Panc1 (cell line): ENCODE measurements at regions of chr11 and their contacts with region 1.

Region 1: GRCh38 chr11:46389450-46390253 is 1.9 kb downstream of the CHRM4 start:
- DNase-seq: no peak
- ATAC-seq: peak; percentile 80
- H3K4me3 ChIP-seq: peak overlapping the region; percentile 54 to 70
- H3K27ac ChIP-seq: no peak overlapping the region; the same call in 1 of the 2 replicates
- H3K4me1 ChIP-seq: peaks cover 17% of the 10 kb centered on the region
- H3K27me3 ChIP-seq: peaks cover 3% of the 10 kb centered on the region; the same call in 1 of the 2 replicates
- CTCF ChIP-seq: peak; percentile 98

Region 2: DNA sequence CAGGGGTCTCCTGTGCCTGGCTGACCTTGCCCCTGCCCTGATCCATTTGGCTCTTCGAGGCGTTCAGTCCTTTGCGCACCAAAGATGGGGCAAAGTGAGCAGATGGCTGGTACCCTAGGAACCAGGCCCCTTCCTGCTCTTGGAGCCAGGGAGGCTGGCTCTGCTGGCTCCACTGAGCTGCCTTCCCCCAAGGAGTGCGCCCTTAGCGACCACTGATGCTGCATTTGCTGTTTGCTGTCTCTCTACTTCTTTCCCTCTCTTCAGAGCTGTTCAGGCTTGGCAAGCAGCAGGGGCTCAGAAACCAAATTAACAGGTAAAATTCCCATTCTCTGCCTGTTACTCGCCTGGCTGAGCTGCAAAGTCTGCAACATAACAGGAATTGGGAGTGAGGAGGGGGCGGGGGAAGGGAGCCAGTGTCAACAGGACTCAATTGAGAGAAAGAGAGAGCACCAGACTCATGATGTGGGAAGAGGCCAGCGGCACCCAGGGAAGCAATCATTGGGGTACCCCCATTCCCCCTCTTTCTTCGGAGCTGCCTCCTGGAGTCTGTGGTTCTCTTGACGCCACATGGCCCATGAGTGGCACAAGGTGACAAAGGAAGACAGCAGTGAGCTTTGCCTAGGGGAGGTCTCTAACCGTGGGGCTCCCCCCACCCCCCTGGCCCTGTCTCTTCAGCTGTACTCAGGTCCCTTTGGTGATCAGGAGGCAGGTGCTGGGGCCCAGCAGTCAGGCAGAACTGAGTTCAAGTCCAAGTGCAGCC is 1541.3 kb before region 1 on chr11:
- CTCF ChIA-PET with region 1: no interaction called
- POLR2A ChIA-PET with region 1: interaction called, 11 read pairs
- in situ Hi-C with region 1: no loop called
- intact Hi-C with region 1: no loop called
- DNase-seq: no peak
- ATAC-seq: no peak
- H3K4me3 ChIP-seq: no peak overlapping the region
- H3K27ac ChIP-seq: no peak overlapping the region
- H3K4me1 ChIP-seq: peaks cover 1% of the 10 kb centered on the region
- H3K27me3 ChIP-seq: no peaks in the 10 kb centered on the region
- CTCF ChIP-seq: no peak

Region 3: DNA sequence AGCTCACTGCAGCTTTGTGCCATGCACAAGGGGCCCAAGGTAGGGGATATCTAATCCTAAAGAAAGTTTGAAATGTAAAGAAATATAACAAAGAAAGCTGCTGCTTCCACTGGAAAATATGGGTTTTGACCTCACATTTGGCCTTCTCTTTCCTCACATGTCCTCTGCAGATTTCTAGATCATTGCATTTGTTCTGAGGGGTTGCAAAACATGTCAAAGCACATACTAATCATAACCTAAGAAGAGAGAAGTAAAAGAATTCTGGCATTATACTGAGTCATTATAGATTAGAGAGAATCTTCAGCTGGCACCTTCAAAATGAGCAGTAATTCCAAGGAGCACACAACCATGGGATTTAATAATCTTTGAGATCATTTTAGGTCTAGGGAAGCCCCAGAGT is 94.4 kb after region 1 on chr11:
- CTCF ChIA-PET with region 1: no interaction called
- POLR2A ChIA-PET with region 1: no interaction called
- in situ Hi-C with region 1: no loop called
- intact Hi-C with region 1: no loop called
- DNase-seq: no peak
- ATAC-seq: no peak
- H3K4me3 ChIP-seq: no peak overlapping the region
- H3K27ac ChIP-seq: no peak overlapping the region
- H3K4me1 ChIP-seq: no peaks in the 10 kb centered on the region
- H3K27me3 ChIP-seq: no peaks in the 10 kb centered on the region
- CTCF ChIP-seq: no peak

Region 4: GRCh38 chr11:46537537-46538295 is 148.1 kb after region 1 on chr11:
- CTCF ChIA-PET with region 1: no interaction called
- POLR2A ChIA-PET with region 1: no interaction called
- in situ Hi-C with region 1: no loop called
- intact Hi-C with region 1: loop called (anchors 5 kb)
- DNase-seq: peak; percentile 61
- ATAC-seq: peak; percentile 93
- H3K4me3 ChIP-seq: no peak overlapping the region
- H3K27ac ChIP-seq: no peak overlapping the region; the same call in 1 of the 2 replicates
- H3K4me1 ChIP-seq: peaks cover 4% of the 10 kb centered on the region; the same call in 1 of the 2 replicates
- H3K27me3 ChIP-seq: no peaks in the 10 kb centered on the region
- CTCF ChIP-seq: peak; percentile 95